Panc1 (cell line): ENCODE measurements at regions of chr13 and their contacts with region 1.

Region 1: GRCh38 chr13:29817604-29818378 is 32.6 kb downstream of the UBL3 start:
- DNase-seq: no peak
- ATAC-seq: no peak
- H3K4me3 ChIP-seq: no peak overlapping the region
- H3K27ac ChIP-seq: no peak overlapping the region
- H3K4me1 ChIP-seq: peaks cover 3% of the 10 kb centered on the region
- H3K27me3 ChIP-seq: no peaks in the 10 kb centered on the region
- CTCF ChIP-seq: no peak

Region 2: GRCh38 chr13:29556742-29557141 is 261.0 kb before region 1 on chr13:
- CTCF ChIA-PET with region 1: no interaction called
- POLR2A ChIA-PET with region 1: interaction called, 10 read pairs
- in situ Hi-C with region 1: no loop called
- intact Hi-C with region 1: no loop called
- DNase-seq: no peak
- ATAC-seq: no peak
- H3K4me3 ChIP-seq: no peak overlapping the region
- H3K27ac ChIP-seq: no peak overlapping the region
- H3K4me1 ChIP-seq: no peaks in the 10 kb centered on the region
- H3K27me3 ChIP-seq: no peaks in the 10 kb centered on the region
- CTCF ChIP-seq: no peak